ENCODE measurements at regions of chr5 and their contacts with region 1.

Region 1: DNA sequence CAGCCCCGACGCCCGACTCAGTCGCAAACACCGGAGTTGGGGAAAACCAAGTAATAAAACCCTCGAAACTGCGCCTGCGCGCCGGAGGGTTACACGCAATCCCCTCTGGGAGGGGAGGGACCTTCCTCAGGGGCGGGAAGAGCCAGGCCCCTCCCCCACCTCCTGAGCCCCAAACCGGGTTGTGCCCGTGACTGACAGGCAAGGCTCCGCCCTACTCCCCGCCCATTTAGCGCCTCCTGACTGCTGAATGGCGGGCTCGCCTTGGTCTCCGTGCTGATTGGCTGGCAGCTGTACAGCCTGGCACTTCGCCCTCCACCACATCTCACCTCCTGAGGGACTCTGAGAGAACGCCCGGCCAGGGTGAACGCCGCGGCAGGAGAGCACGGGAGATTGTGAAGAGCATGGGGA is at the start of gene PRDM9:
- DNase-seq: no peak
- H3K4me3 ChIP-seq: no peak within 1 kb of the TSS
- H3K27ac ChIP-seq: no peak within 1 kb of the TSS
- H3K4me1 ChIP-seq: no peaks in the 10 kb centered on the region
- H3K27me3 ChIP-seq: no peaks in the 10 kb centered on the region
- CTCF ChIP-seq: no peak
- total RNA-seq, gene PRDM9: not detected

Region 2: DNA sequence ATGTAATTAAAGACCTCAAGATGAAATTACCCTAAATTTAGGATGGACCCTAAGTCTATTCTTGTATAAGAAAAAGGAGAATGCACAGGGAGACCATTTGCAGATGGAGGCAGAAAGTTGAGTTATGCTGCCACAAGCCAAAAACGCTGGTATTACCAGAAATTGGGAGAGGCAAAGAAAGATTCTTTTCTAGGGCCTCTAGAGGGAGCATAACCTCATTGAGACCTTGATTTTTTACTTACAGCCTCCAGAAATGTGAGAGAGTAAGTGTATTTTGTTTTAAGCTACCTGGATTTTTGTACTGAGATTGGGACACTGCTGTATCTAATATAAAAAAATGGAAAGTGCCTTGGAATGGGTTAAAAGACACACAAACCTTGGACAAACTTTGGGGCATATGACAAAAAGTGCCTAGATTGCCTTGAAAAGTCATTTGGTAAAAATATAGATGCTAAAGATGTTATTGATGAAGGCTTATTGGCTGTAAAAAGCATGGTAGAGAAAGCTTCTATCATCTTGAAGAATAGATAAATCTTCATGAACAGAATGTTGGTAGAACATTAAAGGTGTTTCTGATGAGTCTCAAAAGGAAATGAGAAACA is 174.5 kb before region 1 on chr5:
- CTCF ChIA-PET with region 1: no interaction called
- dilution Hi-C with region 1: no loop called
- in situ Hi-C with region 1: no loop called
- intact Hi-C with region 1: no loop called
- DNase-seq: peak; percentile 24
- H3K4me3 ChIP-seq: no peak overlapping the region
- H3K27ac ChIP-seq: no peak overlapping the region
- H3K4me1 ChIP-seq: no peaks in the 10 kb centered on the region
- H3K27me3 ChIP-seq: no peaks in the 10 kb centered on the region
- CTCF ChIP-seq: peak; percentile 58 to 65

Region 3: GRCh38 chr5:23352437-23352836 is 154.8 kb before region 1 on chr5:
- CTCF ChIA-PET with region 1: no interaction called
- dilution Hi-C with region 1: no loop called
- in situ Hi-C with region 1: no loop called
- intact Hi-C with region 1: loop called (anchors 10 kb)
- DNase-seq: peak; percentile 5
- H3K4me3 ChIP-seq: no peak overlapping the region
- H3K27ac ChIP-seq: no peak overlapping the region
- H3K4me1 ChIP-seq: no peaks in the 10 kb centered on the region
- H3K27me3 ChIP-seq: no peaks in the 10 kb centered on the region
- CTCF ChIP-seq: peak; percentile 32 to 50

Region 4: GRCh38 chr5:23474315-23474714 is 33.0 kb before region 1 on chr5:
- CTCF ChIA-PET with region 1: interaction called, 32 read pairs
- dilution Hi-C with region 1: no loop called
- in situ Hi-C with region 1: no loop called
- intact Hi-C with region 1: no loop called
- DNase-seq: no peak
- H3K4me3 ChIP-seq: no peak overlapping the region
- H3K27ac ChIP-seq: no peak overlapping the region
- H3K4me1 ChIP-seq: no peaks in the 10 kb centered on the region
- H3K27me3 ChIP-seq: no peaks in the 10 kb centered on the region
- CTCF ChIP-seq: no peak

Region 5: GRCh38 chr5:23588841-23589326 is 81.6 kb after region 1 on chr5:
- CTCF ChIA-PET with region 1: no interaction called
- dilution Hi-C with region 1: loop called (anchors 5 kb)
- in situ Hi-C with region 1: no loop called
- intact Hi-C with region 1: no loop called
- DNase-seq: no peak
- H3K4me3 ChIP-seq: no peak overlapping the region
- H3K27ac ChIP-seq: no peak overlapping the region
- H3K4me1 ChIP-seq: no peaks in the 10 kb centered on the region
- H3K27me3 ChIP-seq: peaks cover 2% of the 10 kb centered on the region
- CTCF ChIP-seq: no peak